Activated CD4-positive, alpha-beta T cell treated with anti-CD3 and anti-CD28 coated beads, Interleukin-2, amount 10 ng/mL, durations not matched to agents 7 days and 5 days (primary cell): ENCODE measurements at regions of chr3 and their contacts with region 1.

Region 1: DNA sequence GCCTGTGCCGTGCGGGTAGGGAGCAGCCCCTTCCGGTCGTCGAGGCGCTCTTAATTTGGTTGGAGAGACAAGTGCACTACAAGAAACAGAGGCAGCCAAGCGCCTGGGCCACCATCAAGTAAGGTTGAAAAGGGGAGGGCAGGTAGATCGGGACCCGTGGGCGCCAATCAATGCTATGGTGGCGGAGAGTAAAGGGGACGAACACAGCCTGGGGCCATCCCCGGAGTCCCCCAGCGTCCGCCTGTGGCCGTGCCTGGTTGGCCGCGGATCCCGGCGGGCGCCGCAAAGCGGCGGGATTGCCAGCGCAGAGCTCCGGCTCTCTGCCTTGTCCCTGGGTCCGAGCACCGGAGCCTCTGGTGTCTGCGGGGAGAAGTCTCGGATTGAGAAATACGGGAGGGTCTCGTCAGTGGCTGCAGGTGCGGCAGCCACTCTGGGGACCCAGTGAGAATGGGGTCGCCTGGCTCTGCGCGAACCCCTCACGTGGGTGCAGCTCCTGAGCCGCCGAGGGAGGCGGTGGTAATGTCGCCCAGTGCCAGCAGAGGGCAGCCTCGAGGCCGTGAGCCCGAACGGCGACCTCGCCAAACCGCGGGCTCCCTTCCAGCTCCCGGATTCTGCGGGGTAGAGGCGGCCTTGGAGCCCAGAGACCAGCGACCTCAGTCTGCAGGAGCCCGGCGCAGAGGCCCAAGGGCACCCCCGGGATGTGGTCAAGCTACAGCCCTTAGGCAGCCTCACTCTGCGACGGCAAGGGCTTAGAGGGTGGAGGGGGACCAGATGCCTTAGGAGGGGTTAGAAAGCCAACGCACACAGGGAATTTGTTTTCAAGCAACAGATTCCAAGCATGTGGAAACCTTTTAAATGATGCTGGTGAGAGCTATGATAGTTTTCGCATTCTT is 10.8 kb downstream of the FOXL2 start:
- DNase-seq: peak; percentile 57
- H3K4me3 Mint-ChIP-seq: peak overlapping the region; percentile 47
- H3K27ac Mint-ChIP-seq: no peak overlapping the region
- H3K4me1 Mint-ChIP-seq: peaks cover 20% of the 10 kb centered on the region
- H3K27me3 Mint-ChIP-seq: peaks cover 79% of the 10 kb centered on the region

Region 2: GRCh38 chr3:138923531-138923994 is 12.5 kb before region 1 on chr3:
- CTCF ChIA-PET with region 1: interaction called, 39 read pairs
- POLR2A ChIA-PET with region 1: no interaction called
- DNase-seq: peak; percentile 90
- H3K4me3 Mint-ChIP-seq: no peak overlapping the region
- H3K27ac Mint-ChIP-seq: no peak overlapping the region
- H3K4me1 Mint-ChIP-seq: no peaks in the 10 kb centered on the region
- H3K27me3 Mint-ChIP-seq: peaks cover 3% of the 10 kb centered on the region

Region 3: DNA sequence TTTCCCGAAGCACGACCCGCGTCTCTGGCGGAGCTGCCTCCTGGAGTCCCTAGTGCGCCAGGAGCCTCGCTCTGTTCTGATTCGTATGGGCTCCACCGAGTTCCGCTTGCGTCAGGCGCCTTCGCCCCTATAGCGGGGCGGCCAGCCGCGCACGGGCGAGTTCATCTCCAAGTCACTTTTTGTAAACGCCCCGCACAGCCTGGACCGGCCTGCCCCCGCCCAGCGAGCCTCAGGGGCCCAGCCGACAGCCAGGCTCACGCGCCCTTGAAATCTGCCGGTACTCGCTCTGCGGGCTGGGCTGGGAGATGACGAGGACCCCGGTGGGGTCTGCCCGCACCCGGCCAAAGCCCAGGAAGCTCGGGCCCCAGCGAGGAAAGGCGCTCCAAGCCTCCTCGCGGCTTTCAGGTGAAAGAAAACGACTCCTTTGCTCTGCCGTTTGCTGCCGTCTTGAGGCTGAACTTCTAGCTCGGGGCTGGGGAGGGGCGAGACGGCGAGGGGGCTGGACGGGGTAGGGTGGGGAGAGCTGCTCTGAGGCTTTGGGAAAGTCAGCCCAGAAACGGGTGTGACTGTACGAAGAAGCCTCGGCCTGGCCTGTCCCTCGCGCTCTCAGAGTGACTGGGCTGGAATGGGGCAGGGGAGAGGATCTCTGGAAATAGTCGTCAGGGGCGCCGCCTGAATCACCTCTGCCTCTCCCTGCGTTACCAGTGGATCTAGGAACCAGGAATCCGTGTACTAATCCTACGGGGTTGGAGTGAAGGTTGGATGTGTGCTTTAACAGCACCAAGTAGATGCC is 11.2 kb after region 1 on chr3 and contains the starts of genes FOXL2 and FOXL2NB:
- CTCF ChIA-PET with region 1: interaction called, 12 read pairs
- POLR2A ChIA-PET with region 1: no interaction called
- DNase-seq: no peak
- H3K4me3 Mint-ChIP-seq: peak within 1 kb of the TSS; percentile 41
- H3K27ac Mint-ChIP-seq: peak within 1 kb of the TSS; percentile 66
- H3K4me1 Mint-ChIP-seq: peaks cover 37% of the 10 kb centered on the region
- H3K27me3 Mint-ChIP-seq: peaks cover 88% of the 10 kb centered on the region
- total RNA-seq, gene FOXL2: not detected
- total RNA-seq, gene FOXL2NB: not detected